Aorta (tissue), 5 donors: ENCODE measurements at regions of chr1 and their contacts with region 1.

Region 1: DNA sequence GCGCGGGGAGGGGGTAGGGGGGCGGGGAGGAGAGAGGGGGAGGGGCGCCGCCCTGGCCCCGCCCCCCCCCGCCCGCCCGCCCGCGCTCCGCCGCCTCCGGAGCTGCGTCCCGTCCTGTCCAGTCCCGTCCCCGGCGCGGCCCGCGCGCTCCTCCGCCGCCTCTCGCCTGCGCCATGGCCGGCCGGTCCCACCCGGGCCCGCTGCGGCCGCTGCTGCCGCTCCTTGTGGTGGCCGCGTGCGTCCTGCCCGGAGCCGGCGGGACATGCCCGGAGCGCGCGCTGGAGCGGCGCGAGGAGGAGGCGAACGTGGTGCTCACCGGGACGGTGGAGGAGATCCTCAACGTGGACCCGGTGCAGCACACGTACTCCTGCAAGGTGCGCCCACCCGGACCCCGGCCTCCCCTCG is at the start of gene AGRN:
- DNase-seq: no peak
- ATAC-seq: peak; percentile 11
- H3K4me3 ChIP-seq: peak within 1 kb of the TSS; percentile 75 to 88
- H3K27ac ChIP-seq: peak within 1 kb of the TSS in 1 of 2 donors; percentile 24
- H3K4me1 ChIP-seq: no peaks in the 10 kb centered on the region
- H3K27me3 ChIP-seq: no peaks in the 10 kb centered on the region
- total RNA-seq, gene AGRN: 25.1 to 38.6 TPM

Region 2: GRCh38 chr1:1059494-1060280 is 39.7 kb after region 1 on chr1:
- intact Hi-C with region 1: loop called in 1 of 2 experiments (anchors 5 kb)
- DNase-seq: peak; percentile 90 to 95
- ATAC-seq: peak; percentile 76
- H3K4me3 ChIP-seq: peak overlapping the region; percentile 28 to 52
- H3K27ac ChIP-seq: no peak overlapping the region
- H3K4me1 ChIP-seq: no peaks in the 10 kb centered on the region
- H3K27me3 ChIP-seq: no peaks in the 10 kb centered on the region

Region 3: DNA sequence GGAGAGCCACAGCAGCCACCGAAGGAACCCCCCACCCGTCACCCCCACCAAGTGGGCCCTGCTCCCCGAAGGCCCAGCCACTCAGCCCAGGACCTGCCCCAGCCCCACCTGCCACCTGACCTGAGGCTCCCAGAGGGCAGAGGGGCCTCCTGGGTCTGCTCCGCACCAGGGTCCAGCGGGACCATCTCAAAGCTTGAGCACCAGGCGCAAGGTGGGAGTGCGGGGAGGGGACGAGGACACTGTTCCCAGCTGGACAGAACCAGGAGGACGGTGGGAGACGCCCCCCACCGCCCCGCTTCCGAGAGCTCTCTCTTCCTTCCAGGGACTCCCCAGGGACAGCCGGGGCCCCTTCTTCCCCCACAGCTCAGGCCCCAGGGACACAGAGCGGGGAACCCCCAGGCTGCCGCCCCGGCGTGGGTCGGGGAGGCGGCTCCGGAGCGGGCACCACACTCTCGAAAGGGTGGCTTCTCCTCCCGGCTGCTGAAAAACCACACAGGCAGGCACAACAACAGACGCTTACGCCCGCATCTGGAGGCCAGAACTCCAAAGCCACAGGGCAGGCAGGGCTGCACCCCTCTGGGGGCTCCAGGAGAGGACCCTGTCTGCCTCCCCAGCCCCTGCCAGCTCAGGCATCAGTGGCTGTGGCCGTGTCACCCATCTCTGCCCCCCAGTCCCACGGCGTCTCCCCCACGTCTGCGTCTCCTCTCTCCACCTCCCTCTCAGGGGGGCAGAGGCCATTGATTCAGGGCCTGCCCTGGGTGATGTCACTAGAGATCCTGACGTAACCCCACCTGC is 151.7 kb after region 1 on chr1:
- intact Hi-C with region 1: no loop called
- DNase-seq: peak in 1 of 2 donors; percentile 64
- ATAC-seq: no peak
- H3K4me3 ChIP-seq: no peak overlapping the region
- H3K27ac ChIP-seq: no peak overlapping the region
- H3K4me1 ChIP-seq: no peaks in the 10 kb centered on the region
- H3K27me3 ChIP-seq: no peaks in the 10 kb centered on the region